Activated CD4-positive, alpha-beta T cell treated with anti-CD3 and anti-CD28 coated beads for 36 hours (primary cell): ENCODE measurements at regions of chr1 and their contacts with region 1.

Region 1: GRCh38 chr1:41268154-41268770 is 26.2 kb upstream of the SCMH1 start:
- DNase-seq: peak; percentile 80
- ATAC-seq: peak; percentile 57
- H3K4me3 Mint-ChIP-seq: no peak overlapping the region
- H3K27ac Mint-ChIP-seq: no peak overlapping the region
- H3K4me1 Mint-ChIP-seq: no peaks in the 10 kb centered on the region
- H3K27me3 Mint-ChIP-seq: peaks cover 9% of the 10 kb centered on the region

Region 2: GRCh38 chr1:41294216-41294615 is 26.0 kb after region 1 on chr1:
- CTCF ChIA-PET with region 1: no interaction called
- POLR2A ChIA-PET with region 1: no interaction called
- intact Hi-C with region 1: no loop called
- DNase-seq: no peak
- ATAC-seq: no peak
- H3K4me3 Mint-ChIP-seq: no peak overlapping the region
- H3K27ac Mint-ChIP-seq: no peak overlapping the region
- H3K4me1 Mint-ChIP-seq: no peaks in the 10 kb centered on the region
- H3K27me3 Mint-ChIP-seq: peaks cover 21% of the 10 kb centered on the region

Region 3: GRCh38 chr1:41322835-41323627 is 54.8 kb after region 1 on chr1:
- CTCF ChIA-PET with region 1: no interaction called
- POLR2A ChIA-PET with region 1: no interaction called
- intact Hi-C with region 1: loop called in 1 of 2 experiments (anchors 5 kb)
- DNase-seq: peak; percentile 62
- ATAC-seq: peak; percentile 76
- H3K4me3 Mint-ChIP-seq: no peak overlapping the region
- H3K27ac Mint-ChIP-seq: no peak overlapping the region
- H3K4me1 Mint-ChIP-seq: no peaks in the 10 kb centered on the region
- H3K27me3 Mint-ChIP-seq: no peaks in the 10 kb centered on the region

Region 4: GRCh38 chr1:41341772-41342562 is 73.7 kb after region 1 on chr1:
- CTCF ChIA-PET with region 1: no interaction called
- POLR2A ChIA-PET with region 1: no interaction called
- intact Hi-C with region 1: no loop called
- DNase-seq: no peak
- ATAC-seq: no peak
- H3K4me3 Mint-ChIP-seq: no peak overlapping the region
- H3K27ac Mint-ChIP-seq: no peak overlapping the region
- H3K4me1 Mint-ChIP-seq: peaks cover 9% of the 10 kb centered on the region
- H3K27me3 Mint-ChIP-seq: peaks cover 19% of the 10 kb centered on the region

Region 5: DNA sequence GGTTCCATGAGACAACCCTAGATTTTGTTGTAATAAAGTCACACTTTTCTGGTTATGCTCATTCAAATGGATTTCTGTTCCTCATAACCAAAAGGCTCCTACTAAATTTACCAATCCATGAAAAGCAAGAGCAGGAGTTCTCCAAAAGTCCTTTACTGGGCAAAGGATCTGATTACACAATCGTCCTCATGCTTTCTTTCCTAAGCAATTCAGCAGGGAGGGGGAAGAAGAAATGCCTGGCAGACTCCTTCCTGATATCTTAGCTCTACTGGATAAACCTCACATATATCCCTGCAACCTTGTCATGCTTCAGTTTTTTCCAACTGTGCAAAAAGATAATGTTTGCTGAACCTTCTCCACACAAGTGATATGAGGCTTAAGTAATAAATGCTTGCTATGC is 817.3 kb after region 1 on chr1:
- CTCF ChIA-PET with region 1: no interaction called
- POLR2A ChIA-PET with region 1: no interaction called
- intact Hi-C with region 1: no loop called
- DNase-seq: no peak
- ATAC-seq: no peak
- H3K4me3 Mint-ChIP-seq: no peak overlapping the region
- H3K27ac Mint-ChIP-seq: no peak overlapping the region
- H3K4me1 Mint-ChIP-seq: peaks cover 2% of the 10 kb centered on the region
- H3K27me3 Mint-ChIP-seq: peaks cover 11% of the 10 kb centered on the region